Esophagus muscularis mucosa (tissue), 4 donors: ENCODE measurements at regions of chr3 and their contacts with region 1.

Region 1: GRCh38 chr3:10010486-10011465 is 15.5 kb upstream of the FANCD2 start:
- DNase-seq: peak; percentile 99
- H3K4me3 ChIP-seq: peak overlapping the region; percentile 65 to 81 (median 72)
- H3K27ac ChIP-seq: peak overlapping the region; percentile 80 to 89 (median 83)
- H3K4me1 ChIP-seq: peaks cover 42 to 54% (median 49%) of the 10 kb centered on the region in 4 donors
- H3K27me3 ChIP-seq: no peaks in the 10 kb centered on the region
- CTCF ChIP-seq: no peak
- EP300 ChIP-seq: no peak
- POLR2A ChIP-seq: no peak

Region 2: GRCh38 chr3:9976721-9977709 is 33.8 kb before region 1 on chr3:
- intact Hi-C with region 1: loop called (anchors 5 kb)
- DNase-seq: peak; percentile 95
- H3K4me3 ChIP-seq: peak overlapping the region in 2 of 4 donors; percentile 1 to 20
- H3K27ac ChIP-seq: peak overlapping the region; percentile 83 to 85 (median 84)
- H3K4me1 ChIP-seq: peaks cover 16 to 44% (median 44%) of the 10 kb centered on the region in 4 donors
- H3K27me3 ChIP-seq: no peaks in the 10 kb centered on the region
- CTCF ChIP-seq: no peak
- EP300 ChIP-seq: no peak
- POLR2A ChIP-seq: no peak